ENCODE measurements at regions of chr5 and their contacts with region 1.

Region 1: DNA sequence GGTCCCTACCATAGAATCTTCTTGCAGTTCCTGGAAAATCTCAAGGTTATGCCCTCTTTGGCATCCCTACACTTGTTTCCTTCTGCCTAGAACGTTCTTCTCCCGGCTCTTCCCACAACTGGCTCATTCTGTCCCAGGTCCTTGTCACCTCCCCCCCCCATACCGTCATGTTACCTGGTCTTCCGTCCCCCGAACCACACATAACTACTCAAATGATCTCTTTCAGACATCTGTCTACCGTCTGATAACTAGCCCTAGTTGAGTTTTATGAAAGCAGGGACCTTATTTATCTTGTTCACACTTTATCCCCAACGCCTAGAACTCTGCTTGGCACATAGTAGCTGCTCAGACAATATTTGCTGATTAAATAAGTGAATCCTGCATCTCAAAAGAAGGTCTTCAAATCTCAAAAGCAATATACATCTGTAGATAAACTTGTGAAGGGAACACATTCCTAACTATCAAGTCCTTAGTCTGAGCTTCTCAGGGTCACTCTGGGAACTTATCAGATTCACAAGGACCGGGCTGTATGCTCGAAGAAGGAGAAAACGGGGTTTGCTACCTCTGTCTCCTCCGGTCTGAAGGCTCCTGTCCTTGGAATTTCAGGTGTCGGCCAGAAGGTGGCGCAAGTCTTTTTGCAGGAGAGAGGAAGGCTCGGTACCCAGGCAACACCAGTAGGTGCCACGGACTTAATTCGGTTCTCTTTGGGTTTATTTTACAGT is 30.0 kb downstream of the LCP2 start:
- DNase-seq: peak; percentile 67 to 88 (median 78)
- ATAC-seq: peak; percentile 60 to 75
- H3K4me3 Mint-ChIP-seq: peak overlapping the region; percentile 51 to 86 (median 71)
- H3K27ac Mint-ChIP-seq: peak overlapping the region; percentile 90 to 99 (median 94)
- H3K4me1 Mint-ChIP-seq: peaks cover 56 to 95% (median 92%) of the 10 kb centered on the region in 4 donors
- H3K27me3 Mint-ChIP-seq: no peaks in the 10 kb centered on the region

Region 2: DNA sequence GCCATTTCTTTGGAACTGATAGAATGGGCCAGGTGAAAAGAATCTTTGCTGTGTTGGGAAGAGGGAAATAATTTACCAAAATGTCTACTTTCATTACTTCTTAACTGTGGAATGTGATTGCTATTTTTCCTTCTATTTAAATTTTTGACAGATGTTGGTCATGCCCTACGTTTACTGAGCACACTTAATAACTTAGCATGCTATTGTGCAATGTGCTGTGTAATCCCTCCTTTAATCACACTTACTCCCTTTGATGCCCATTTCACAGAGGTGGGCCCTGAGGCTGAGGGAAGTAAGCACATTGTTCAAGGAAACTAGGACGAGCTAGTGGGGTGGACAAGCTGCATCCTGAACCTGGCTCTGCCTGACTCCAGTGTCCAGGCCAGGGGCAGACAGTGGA is 239.5 kb before region 1 on chr5:
- POLR2A ChIA-PET with region 1: no interaction called
- DNase-seq: no peak
- ATAC-seq: no peak
- H3K4me3 Mint-ChIP-seq: no peak overlapping the region
- H3K27ac Mint-ChIP-seq: peak overlapping the region in 1 of 10 donors; percentile 32
- H3K4me1 Mint-ChIP-seq: peaks cover 0 to 6% (median 0%) of the 10 kb centered on the region in 4 donors
- H3K27me3 Mint-ChIP-seq: no peaks in the 10 kb centered on the region

Region 3: DNA sequence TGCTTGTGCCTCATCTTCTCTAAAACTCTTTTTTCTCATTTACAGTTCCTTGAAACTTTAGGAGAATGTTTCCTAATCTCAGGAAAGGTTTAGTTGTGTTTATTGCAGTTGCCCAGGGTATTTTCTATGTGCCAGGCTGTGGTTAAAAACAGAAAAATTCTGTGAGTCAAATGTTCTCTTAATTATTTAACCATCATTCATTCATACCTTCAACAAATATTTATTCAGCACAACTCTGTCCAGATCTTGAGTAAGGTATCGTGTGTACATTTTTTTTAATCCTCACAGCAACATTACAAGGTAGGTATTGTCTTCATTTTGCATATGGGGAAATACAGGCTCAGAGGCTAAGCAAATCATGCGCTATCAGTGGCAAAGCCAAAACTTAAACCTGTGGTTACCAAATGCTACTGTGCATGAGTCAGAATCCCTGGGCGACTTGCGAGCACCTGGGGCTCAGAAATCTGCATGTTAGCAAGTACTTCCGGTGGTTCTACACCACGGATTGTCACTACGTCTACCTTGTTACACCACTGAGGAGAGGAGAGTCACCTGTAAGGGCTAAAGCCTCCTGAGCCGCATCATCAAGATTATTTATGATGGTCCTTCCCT is 13.6 kb before region 1 on chr5:
- POLR2A ChIA-PET with region 1: interaction called, 96 read pairs
- DNase-seq: peak in 9 of 10 donors; percentile 53 to 85 (median 71)
- ATAC-seq: peak; percentile 97
- H3K4me3 Mint-ChIP-seq: peak overlapping the region in 9 of 10 donors; percentile 0 to 54 (median 36)
- H3K27ac Mint-ChIP-seq: peak overlapping the region; percentile 73 to 99 (median 88)
- H3K4me1 Mint-ChIP-seq: peaks cover 35 to 73% (median 63%) of the 10 kb centered on the region in 4 donors
- H3K27me3 Mint-ChIP-seq: no peaks in the 10 kb centered on the region

Region 4: GRCh38 chr5:170287532-170287931 is 19.9 kb after region 1 on chr5:
- POLR2A ChIA-PET with region 1: interaction called, 687 read pairs
- DNase-seq: no peak
- ATAC-seq: peak in 1 of 2 donors; percentile 3
- H3K4me3 Mint-ChIP-seq: peak overlapping the region; percentile 29 to 99 (median 80)
- H3K27ac Mint-ChIP-seq: peak overlapping the region; percentile 92 to 99 (median 96)
- H3K4me1 Mint-ChIP-seq: peaks cover 79 to 100% (median 99%) of the 10 kb centered on the region in 4 donors
- H3K27me3 Mint-ChIP-seq: no peaks in the 10 kb centered on the region

Region 5: DNA sequence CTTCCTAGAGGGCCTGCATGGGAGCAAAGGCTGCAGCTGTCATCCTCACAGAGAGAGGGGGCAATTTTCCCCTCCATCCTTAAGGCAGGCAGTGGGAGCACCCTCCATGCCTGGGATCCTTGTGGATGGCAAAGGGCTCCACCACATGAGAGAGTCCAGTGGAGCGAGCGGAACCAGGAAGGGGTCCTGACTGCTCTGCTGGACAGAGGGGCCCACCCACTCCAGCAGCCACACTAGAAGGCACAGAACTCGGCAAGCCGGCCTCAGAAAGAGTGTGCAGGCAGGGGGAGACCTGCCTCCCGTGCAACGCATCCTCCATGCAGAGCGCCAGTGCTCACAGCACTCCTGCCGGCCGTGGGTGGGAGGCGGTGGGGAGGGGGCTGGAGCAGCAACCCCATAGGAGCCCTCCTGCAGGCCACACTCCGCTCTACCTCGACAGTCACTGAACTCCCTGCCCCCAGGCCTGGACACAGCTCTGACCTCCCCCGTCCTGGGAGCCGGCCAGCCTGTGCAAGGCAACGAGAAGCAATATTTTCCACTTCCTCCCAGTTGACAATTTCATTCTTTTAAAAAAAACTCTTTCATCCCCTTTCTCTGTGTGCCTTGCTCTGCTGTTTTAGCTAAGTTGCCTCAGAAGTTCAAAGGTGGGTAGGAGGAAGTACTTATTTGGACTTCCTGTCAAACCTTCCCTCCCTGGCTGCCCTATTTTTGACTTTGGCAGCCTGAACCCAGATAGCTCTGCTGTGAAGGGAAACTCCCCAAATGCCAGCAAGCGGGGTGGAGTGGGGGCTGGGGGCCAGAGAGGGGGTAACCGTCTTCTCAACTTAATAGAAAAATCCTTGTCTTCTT is 35.3 kb after region 1 on chr5:
- POLR2A ChIA-PET with region 1: interaction called, 687 read pairs
- DNase-seq: peak; percentile 44 to 87 (median 80)
- ATAC-seq: peak; percentile 93 to 97
- H3K4me3 Mint-ChIP-seq: peak overlapping the region; percentile 78 to 96 (median 89)
- H3K27ac Mint-ChIP-seq: peak overlapping the region; percentile 89 to 99 (median 96)
- H3K4me1 Mint-ChIP-seq: peaks cover 36 to 91% (median 86%) of the 10 kb centered on the region in 4 donors
- H3K27me3 Mint-ChIP-seq: no peaks in the 10 kb centered on the region

Region 6: GRCh38 chr5:170338933-170339779 is 71.6 kb after region 1 on chr5:
- POLR2A ChIA-PET with region 1: interaction called, 223 read pairs
- DNase-seq: peak in 9 of 10 donors; percentile 52 to 84 (median 64)
- ATAC-seq: peak; percentile 70 to 74
- H3K4me3 Mint-ChIP-seq: peak overlapping the region in 5 of 10 donors; percentile 22 to 57 (median 32)
- H3K27ac Mint-ChIP-seq: peak overlapping the region in 9 of 10 donors; percentile 48 to 94 (median 90)
- H3K4me1 Mint-ChIP-seq: peaks cover 0 to 40% (median 35%) of the 10 kb centered on the region in 4 donors
- H3K27me3 Mint-ChIP-seq: no peaks in the 10 kb centered on the region